CD14-positive monocyte (primary cell): ENCODE measurements at regions of chr12 and their contacts with region 1.

Region 1: DNA sequence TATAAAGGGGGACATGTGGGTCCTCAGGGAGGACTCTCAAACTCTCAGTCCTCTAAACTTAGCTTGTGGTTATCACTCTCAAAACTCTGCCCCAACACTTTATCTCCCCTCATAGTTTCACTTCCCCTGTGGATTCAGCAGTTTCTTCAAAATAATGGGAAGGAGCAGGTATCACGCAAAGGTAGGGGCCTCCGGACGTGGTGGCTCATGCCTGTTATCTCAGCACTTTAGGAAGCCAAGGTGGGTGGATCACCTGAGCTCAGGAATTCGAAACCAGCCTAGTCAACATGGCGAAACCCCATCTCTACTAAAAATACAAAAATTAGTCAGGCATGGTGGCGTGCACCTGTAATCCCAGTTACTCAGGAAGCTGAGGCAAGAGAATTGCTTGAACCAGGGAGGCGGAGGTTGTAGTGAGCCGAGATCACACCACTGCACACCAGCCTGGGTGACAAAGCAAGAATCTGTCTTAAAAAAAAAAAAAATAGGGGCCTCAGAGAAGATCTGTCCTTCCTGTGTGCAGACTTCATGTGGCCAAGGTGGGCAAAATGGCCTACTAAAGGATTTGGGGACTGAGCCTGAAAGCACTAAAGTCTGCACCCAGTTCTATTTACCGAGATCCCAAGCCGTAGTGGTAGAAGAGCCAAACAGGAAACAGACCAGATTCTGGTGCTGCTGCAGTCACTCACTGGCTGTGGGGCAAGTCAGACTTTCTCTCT is 6.4 kb downstream of the ITGB7 start:
- DNase-seq: no peak
- H3K4me3 ChIP-seq: peak overlapping the region in 1 of 3 experiments; percentile 0
- H3K4me3 Mint-ChIP-seq: peak overlapping the region; percentile 34 to 51
- H3K27ac ChIP-seq: no peak overlapping the region
- H3K27ac Mint-ChIP-seq: peak overlapping the region; percentile 6 to 73 (median 55)
- H3K4me1 ChIP-seq: peaks cover 43 to 51% of the 10 kb centered on the region in 2 donors
- H3K4me1 Mint-ChIP-seq: peaks cover 53% of the 10 kb centered on the region
- H3K27me3 ChIP-seq: no peaks in the 10 kb centered on the region
- H3K27me3 Mint-ChIP-seq: peaks cover 7 to 14% (median 14%) of the 10 kb centered on the region in 3 donors
- CTCF ChIP-seq: no peak

Region 2: DNA sequence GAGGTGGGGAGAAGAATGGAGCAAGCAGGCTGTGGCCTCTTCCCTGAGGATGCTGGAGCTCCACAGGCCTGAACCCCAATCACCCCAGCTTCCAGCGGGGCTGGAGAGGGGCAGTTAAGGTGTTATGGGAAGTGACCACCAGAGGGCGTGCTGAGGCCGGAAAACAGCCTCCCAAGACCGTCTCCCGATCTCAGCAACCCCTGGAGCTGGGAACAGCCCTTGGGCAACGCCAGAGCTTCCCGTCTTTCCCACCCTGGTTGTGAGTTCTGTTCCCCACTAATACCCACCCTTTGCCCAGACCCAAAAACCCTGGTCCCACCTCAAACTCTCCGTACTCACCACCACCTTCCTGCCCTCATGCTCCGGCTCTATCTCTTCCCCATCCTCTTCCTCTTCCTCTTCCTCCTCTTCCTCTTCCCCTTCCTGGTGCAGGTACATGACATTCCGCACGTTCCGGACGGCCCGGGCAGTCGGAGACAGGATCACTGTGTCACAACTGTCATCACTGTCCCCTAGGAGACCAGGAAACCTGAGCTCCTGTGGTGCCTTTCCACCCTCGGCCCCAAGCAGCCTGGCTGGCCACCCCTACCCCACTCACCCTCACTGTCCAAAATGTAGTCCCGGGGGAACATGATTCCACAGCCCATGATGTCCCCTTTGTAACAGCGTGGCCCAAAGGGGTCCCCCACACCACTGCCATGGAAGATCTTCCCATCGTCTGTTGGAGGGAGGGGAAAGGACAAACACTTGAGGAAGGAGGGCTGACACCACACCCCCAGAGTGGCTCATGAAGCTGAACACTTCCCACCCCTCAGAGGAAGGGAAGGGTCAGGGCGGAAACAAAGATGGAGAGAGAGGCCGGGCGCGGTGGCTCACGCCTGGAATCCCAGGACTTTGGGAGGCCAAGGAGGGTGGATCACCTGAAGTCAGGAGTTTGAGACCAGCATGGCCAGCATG is 134.4 kb before region 1 on chr12:
- intact Hi-C with region 1: loop called (anchors 5 kb)
- DNase-seq: peak; percentile 54 to 72 (median 67)
- H3K4me3 ChIP-seq: no peak overlapping the region
- H3K4me3 Mint-ChIP-seq: peak overlapping the region in 1 of 2 donors; percentile 17
- H3K27ac ChIP-seq: no peak overlapping the region
- H3K27ac Mint-ChIP-seq: peak overlapping the region in 3 of 7 donors; percentile 23 to 66 (median 48)
- H3K4me1 ChIP-seq: peaks cover 4 to 15% of the 10 kb centered on the region in 2 donors
- H3K4me1 Mint-ChIP-seq: peaks cover 24% of the 10 kb centered on the region
- H3K27me3 ChIP-seq: no peaks in the 10 kb centered on the region
- H3K27me3 Mint-ChIP-seq: peaks cover 0 to 1% (median 1%) of the 10 kb centered on the region in 3 donors
- CTCF ChIP-seq: peak; percentile 96

Region 3: GRCh38 chr12:53159195-53159839 is 41.3 kb before region 1 on chr12:
- intact Hi-C with region 1: loop called (anchors 1 to 2 kb)
- DNase-seq: peak; percentile 63 to 71 (median 71)
- H3K4me3 ChIP-seq: no peak overlapping the region
- H3K4me3 Mint-ChIP-seq: no peak overlapping the region
- H3K27ac ChIP-seq: no peak overlapping the region
- H3K27ac Mint-ChIP-seq: no peak overlapping the region
- H3K4me1 ChIP-seq: no peaks in the 10 kb centered on the region
- H3K4me1 Mint-ChIP-seq: peaks cover 5% of the 10 kb centered on the region
- H3K27me3 ChIP-seq: no peaks in the 10 kb centered on the region
- H3K27me3 Mint-ChIP-seq: peaks cover 0 to 6% (median 1%) of the 10 kb centered on the region in 3 donors
- CTCF ChIP-seq: peak; percentile 94

Region 4: GRCh38 chr12:53180220-53180930 is 20.2 kb before region 1 on chr12 and contains the starts of genes CSAD and ZNF740:
- intact Hi-C with region 1: no loop called
- DNase-seq: peak; percentile 93 to 95 (median 93)
- H3K4me3 ChIP-seq: peak within 1 kb of the TSS; percentile 80 to 90 (median 84)
- H3K4me3 Mint-ChIP-seq: peak within 1 kb of the TSS; percentile 93 to 95
- H3K27ac ChIP-seq: peak within 1 kb of the TSS; percentile 89
- H3K27ac Mint-ChIP-seq: peak within 1 kb of the TSS; percentile 89 to 95 (median 94)
- H3K4me1 ChIP-seq: peaks cover 34 to 43% of the 10 kb centered on the region in 2 donors
- H3K4me1 Mint-ChIP-seq: peaks cover 43% of the 10 kb centered on the region
- H3K27me3 ChIP-seq: no peaks in the 10 kb centered on the region
- H3K27me3 Mint-ChIP-seq: no peaks in the 10 kb centered on the region
- CTCF ChIP-seq: no peak
- polyA plus RNA-seq, gene CSAD: 1.3 to 145 (median 1.4) TPM
- polyA plus RNA-seq, gene ZNF740: 0.74 to 15.4 (median 1.3) TPM